ENCODE measurements at regions of chr1 and their contacts with region 1.

Region 1: DNA sequence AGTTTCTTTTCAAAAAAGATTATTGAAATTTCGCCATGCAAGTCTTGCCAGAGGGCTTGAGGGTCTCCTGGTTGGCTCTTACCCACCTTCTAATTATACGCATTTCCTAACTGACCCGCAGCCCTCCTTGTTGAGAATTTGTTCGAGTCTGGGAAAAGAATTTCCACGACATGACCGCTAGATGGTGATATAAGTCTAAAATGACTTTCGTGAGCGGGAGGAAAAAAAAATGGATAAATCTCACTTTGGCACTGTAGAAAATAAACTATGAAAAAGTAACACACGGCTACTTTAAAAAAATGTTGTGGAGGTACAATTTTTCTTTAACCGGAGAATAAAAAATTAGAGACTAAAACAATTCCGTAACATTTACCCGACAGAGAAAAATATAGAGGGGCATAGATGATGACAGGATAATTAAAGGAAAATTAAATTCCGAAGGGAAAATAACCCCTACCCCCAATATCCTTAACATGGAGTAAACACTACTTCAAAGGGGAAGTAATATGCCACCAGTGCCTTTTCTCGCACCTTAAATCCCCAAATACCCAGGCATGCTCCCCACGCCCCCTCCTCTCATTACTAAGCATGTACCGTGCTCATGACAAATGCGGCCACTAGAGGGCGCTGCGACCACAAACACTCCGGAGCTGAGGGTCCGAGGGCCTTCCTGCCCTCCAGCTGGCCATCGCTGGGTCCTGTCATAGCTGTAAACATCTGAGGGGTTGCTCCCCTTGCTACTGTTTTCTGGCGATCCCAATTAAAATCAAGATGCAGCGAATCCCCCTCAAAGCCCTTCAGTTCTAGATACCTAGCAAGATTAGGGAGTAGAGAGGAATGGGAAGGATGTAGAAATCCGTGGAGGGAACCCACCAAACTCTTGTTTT is 266.9 kb downstream of the ASTN1 start:
- DNase-seq: peak; percentile 47 to 83 (median 79)
- ATAC-seq: peak; percentile 53 to 73
- H3K4me3 ChIP-seq: peak overlapping the region; percentile 16
- H3K27ac ChIP-seq: no peak overlapping the region
- H3K4me1 ChIP-seq: no peaks in the 10 kb centered on the region
- H3K27me3 ChIP-seq: no peaks in the 10 kb centered on the region

Region 2: GRCh38 chr1:176174108-176174507 is 723.5 kb before region 1 on chr1:
- intact Hi-C with region 1: no loop called
- DNase-seq: no peak
- ATAC-seq: no peak
- H3K4me3 ChIP-seq: no peak overlapping the region
- H3K27ac ChIP-seq: no peak overlapping the region
- H3K4me1 ChIP-seq: no peaks in the 10 kb centered on the region
- H3K27me3 ChIP-seq: no peaks in the 10 kb centered on the region

Region 3: GRCh38 chr1:176843352-176844297 is 54.0 kb before region 1 on chr1:
- intact Hi-C with region 1: no loop called
- DNase-seq: peak in 2 of 3 donors; percentile 25 to 68
- ATAC-seq: peak; percentile 57 to 76
- H3K4me3 ChIP-seq: no peak overlapping the region
- H3K27ac ChIP-seq: no peak overlapping the region
- H3K4me1 ChIP-seq: peaks cover 2% of the 10 kb centered on the region
- H3K27me3 ChIP-seq: no peaks in the 10 kb centered on the region

Region 4: GRCh38 chr1:176949033-176949662 is 51.6 kb after region 1 on chr1:
- intact Hi-C with region 1: loop called in 1 of 4 experiments (anchors 2 kb)
- DNase-seq: peak; percentile 34 to 78 (median 63)
- ATAC-seq: peak; percentile 71 to 79
- H3K4me3 ChIP-seq: no peak overlapping the region
- H3K27ac ChIP-seq: no peak overlapping the region
- H3K4me1 ChIP-seq: no peaks in the 10 kb centered on the region
- H3K27me3 ChIP-seq: no peaks in the 10 kb centered on the region

Region 5: GRCh38 chr1:177181631-177182291 is 284.2 kb after region 1 on chr1:
- intact Hi-C with region 1: loop called (anchors 5 kb)
- DNase-seq: peak; percentile 53 to 79 (median 68)
- ATAC-seq: peak; percentile 74 to 76
- H3K4me3 ChIP-seq: no peak overlapping the region
- H3K27ac ChIP-seq: no peak overlapping the region
- H3K4me1 ChIP-seq: no peaks in the 10 kb centered on the region
- H3K27me3 ChIP-seq: no peaks in the 10 kb centered on the region

Region 6: GRCh38 chr1:177355595-177355994 is 458.0 kb after region 1 on chr1:
- intact Hi-C with region 1: loop called in 1 of 4 experiments (anchors 5 kb)
- DNase-seq: no peak
- ATAC-seq: no peak
- H3K4me3 ChIP-seq: no peak overlapping the region
- H3K27ac ChIP-seq: no peak overlapping the region
- H3K4me1 ChIP-seq: no peaks in the 10 kb centered on the region
- H3K27me3 ChIP-seq: no peaks in the 10 kb centered on the region

Region 7: DNA sequence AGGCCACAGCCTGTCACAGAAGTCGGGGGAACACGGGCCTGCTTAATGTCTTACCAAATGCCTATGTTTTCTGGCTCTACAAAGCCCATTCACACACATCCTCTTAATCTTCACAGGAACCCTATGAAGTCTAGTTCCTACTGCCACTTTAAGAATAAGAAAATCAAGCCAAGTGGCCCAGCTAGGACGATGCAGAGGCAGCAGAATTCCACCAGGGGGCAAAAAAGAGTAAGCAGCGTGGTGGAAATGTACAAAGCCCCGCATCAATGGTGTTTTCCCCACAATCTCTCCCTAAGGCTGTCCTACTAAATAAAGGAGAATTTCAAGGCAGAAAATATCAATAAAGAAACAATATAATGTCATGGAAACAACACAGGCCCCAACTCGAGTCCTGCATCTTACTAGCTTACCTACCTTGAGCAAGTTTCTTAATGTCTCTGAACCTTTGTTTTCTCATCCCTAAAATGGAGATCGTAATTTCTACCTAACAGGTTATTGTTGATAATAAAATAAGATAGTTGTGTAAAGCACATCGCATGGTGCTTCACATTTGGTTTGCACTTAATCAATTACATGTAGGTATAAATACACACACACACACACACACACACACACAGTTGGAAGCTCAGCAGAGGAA is 1050.9 kb after region 1 on chr1:
- intact Hi-C with region 1: loop called in 3 of 4 experiments (anchors 10 kb)
- DNase-seq: peak; percentile 35 to 71 (median 53)
- ATAC-seq: peak; percentile 49 to 66
- H3K4me3 ChIP-seq: no peak overlapping the region
- H3K27ac ChIP-seq: no peak overlapping the region
- H3K4me1 ChIP-seq: no peaks in the 10 kb centered on the region
- H3K27me3 ChIP-seq: no peaks in the 10 kb centered on the region

Measured in right cardiac atrium (tissue), 5 donors.